MCF 10A (cell line): ENCODE measurements at regions of chr1 and their contacts with region 1.

Region 1: DNA sequence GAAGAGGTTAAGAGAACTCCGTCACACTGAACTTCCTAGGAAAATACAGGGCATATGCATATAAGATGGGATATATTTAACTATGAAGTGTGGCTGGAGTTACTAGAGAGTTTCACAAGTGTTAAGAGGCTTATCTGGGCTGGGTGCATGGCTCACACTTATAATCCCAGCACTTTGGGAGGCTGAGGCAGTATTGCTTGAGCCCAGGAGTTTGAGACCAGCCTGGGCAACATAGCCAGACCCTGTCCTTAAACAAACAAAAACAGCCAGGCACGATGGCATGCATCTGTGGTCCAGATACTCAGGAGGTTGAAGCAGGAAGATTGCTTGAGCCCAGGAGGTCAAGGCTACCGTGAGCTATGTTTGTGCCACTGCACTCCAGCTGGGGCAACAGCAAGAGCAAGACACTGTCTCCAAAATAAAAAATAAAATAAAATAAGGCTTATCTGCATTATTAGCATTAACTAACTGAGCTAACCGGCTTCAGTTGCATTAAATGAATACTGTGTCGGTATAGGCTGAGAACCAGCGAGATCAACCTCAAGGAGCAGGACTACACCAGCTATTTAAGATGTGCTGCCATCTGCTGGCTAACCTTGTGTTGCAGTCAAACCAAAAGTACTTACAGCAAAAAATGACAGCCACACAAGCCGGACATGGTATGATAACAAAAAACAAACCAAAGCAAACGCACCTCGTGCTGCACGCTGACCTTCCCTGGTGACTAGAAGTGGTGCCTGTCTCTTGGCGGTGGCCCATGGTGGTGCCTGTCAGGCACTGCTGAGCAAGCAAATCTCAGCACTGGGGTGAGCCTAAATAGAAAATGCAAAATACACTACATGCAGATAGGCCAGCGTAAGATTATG is 19.7 kb upstream of the RBBP5 start:
- DNase-seq: peak; percentile 91
- H3K4me3 Mint-ChIP-seq: no peak overlapping the region
- H3K27ac Mint-ChIP-seq: no peak overlapping the region
- H3K4me1 Mint-ChIP-seq: peaks cover 19% of the 10 kb centered on the region
- H3K27me3 Mint-ChIP-seq: no peaks in the 10 kb centered on the region
- CTCF ChIP-seq: peak; percentile 82

Region 2: DNA sequence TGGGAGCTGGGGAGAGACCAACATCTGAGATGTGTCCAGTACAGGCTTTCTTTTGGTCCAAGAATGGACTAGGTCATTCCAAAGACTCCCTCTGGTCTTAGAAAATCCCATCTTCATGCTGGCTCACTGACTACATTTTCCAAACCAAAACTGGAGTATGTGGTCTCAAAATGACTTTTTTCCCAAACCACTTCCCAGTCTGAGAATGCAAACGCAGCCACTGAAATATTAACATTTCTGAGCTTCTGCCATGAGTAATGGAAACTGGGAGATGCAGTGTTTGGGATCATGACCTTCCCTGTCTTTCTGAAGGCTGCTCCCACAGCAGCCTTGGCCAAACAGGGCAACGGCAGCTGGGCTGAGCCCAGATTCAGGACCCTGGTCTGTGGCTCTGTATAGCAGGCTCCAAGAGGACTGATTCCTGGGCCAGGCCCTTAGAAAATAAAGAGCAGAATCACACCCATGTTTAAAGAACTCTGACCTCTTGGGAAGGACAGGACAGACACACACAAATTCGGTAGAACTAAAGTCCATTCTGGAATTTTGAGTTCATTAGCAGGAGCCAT is 160.5 kb before region 1 on chr1:
- CTCF ChIA-PET with region 1: interaction called, 56 read pairs
- POLR2A ChIA-PET with region 1: interaction called, 6 read pairs
- intact Hi-C with region 1: no loop called
- DNase-seq: no peak
- H3K4me3 Mint-ChIP-seq: no peak overlapping the region
- H3K27ac Mint-ChIP-seq: no peak overlapping the region
- H3K4me1 Mint-ChIP-seq: no peaks in the 10 kb centered on the region
- H3K27me3 Mint-ChIP-seq: peaks cover 62% of the 10 kb centered on the region
- CTCF ChIP-seq: no peak

Region 3: GRCh38 chr1:205082431-205082830 is 59.0 kb before region 1 on chr1:
- CTCF ChIA-PET with region 1: interaction called, 11 read pairs
- POLR2A ChIA-PET with region 1: no interaction called
- intact Hi-C with region 1: no loop called
- DNase-seq: no peak
- H3K4me3 Mint-ChIP-seq: no peak overlapping the region
- H3K27ac Mint-ChIP-seq: no peak overlapping the region
- H3K4me1 Mint-ChIP-seq: peaks cover 4% of the 10 kb centered on the region
- H3K27me3 Mint-ChIP-seq: no peaks in the 10 kb centered on the region
- CTCF ChIP-seq: no peak

Region 4: DNA sequence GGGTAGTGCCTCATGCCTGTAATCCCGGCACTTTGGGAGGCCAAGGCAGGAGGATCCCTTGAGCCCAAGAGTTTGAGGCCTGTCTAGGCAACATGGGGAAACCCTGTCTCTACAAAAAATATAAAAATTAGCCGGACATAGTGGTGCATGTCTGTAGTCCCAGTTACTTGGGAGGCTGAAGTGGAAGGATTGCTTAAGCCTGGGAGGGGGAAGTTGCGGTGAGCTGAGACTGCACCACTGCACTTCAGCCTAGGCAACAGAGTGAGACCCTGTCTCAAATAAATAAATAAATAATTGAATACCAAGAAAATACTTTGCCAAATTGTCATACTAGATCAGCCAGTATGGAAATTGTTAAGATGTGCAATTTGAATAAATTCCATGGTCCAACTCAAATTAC is 13.8 kb before region 1 on chr1:
- CTCF ChIA-PET with region 1: interaction called, 231 read pairs
- POLR2A ChIA-PET with region 1: interaction called, 33 read pairs
- intact Hi-C with region 1: loop called (anchors 1 kb)
- DNase-seq: no peak
- H3K4me3 Mint-ChIP-seq: no peak overlapping the region
- H3K27ac Mint-ChIP-seq: no peak overlapping the region
- H3K4me1 Mint-ChIP-seq: peaks cover 5% of the 10 kb centered on the region
- H3K27me3 Mint-ChIP-seq: no peaks in the 10 kb centered on the region
- CTCF ChIP-seq: no peak

Region 5: DNA sequence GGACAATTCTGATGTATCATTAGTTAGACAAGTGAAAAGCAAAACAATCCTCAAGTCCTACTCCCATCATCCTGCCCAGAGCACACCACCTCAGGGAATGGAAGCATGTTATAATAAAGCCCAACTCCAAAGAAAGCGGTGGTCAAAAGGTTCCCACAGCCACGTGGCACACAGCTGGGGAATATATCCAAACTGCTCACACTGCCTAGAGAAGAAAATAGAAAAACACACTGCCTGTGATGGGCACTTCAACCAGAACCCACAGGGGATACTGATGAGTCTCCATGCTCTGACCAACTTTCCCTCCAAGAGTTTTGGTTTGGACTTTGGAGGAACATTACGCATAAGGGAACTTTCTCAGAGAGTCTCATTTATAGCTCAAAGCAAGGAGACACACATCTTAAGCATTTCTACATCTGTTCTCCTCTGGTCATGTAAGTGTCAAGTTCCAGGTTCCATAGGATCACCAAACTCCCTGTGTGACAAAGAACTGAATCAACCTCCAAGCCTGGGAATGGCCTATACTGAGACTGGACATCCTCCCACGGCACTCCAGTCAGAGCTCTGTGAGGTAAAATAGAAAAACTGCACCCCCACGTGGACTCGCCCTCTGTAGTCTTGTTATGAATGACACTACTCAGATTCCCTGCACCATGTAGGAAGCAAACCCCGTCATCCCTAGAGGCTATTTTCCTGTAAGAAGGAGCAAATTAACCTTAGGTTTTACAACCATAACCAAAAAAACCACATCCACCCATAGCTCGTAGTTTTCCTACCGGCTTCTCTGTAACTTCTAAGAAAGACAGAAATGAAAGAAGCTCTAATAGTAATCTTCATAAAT is 57.8 kb after region 1 on chr1:
- CTCF ChIA-PET with region 1: interaction called, 14 read pairs
- POLR2A ChIA-PET with region 1: no interaction called
- intact Hi-C with region 1: no loop called
- DNase-seq: no peak
- H3K4me3 Mint-ChIP-seq: no peak overlapping the region
- H3K27ac Mint-ChIP-seq: no peak overlapping the region
- H3K4me1 Mint-ChIP-seq: peaks cover 17% of the 10 kb centered on the region
- H3K27me3 Mint-ChIP-seq: no peaks in the 10 kb centered on the region
- CTCF ChIP-seq: no peak

Region 6: DNA sequence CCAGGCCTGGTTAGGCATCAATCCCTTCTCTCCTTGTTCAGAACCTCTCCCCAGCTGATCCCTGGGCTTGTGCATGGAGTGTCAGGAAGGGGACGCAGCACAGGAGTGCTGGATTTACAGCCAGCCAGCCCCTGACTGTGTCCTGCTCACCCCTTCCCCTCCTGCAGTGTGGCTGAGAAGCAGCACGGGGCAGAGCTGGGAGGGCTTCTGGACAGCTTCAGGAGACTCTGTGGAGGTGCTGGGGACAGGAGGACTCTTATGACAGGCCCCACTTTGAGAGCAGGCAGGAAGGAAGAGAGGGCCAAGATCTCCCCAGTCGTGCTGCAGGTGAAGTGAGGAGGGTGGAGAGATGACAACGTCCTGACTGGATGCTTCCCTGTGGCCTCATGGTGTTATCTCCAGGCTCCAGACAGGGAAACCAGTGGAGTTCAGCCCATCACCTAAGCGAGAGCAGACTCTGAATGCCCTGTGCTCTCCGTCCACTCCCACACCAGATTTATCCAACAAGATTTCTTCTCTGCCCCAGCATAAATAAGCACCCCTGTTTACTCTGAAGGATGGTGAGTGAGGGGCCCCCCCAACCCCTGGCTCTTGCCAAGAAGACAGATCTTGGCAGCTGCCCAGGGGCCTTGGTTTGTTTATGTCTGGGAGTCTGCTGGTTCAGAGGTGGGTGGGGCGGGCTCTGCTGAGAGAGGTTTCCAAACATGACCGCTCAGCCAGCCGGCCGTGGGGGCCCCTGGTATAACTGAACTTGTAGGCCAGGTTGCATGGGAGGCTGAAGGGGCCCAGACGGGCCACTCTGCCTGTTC is 107.5 kb after region 1 on chr1:
- CTCF ChIA-PET with region 1: interaction called, 113 read pairs
- POLR2A ChIA-PET with region 1: interaction called, 5 read pairs
- intact Hi-C with region 1: no loop called
- DNase-seq: peak; percentile 69
- H3K4me3 Mint-ChIP-seq: no peak overlapping the region
- H3K27ac Mint-ChIP-seq: no peak overlapping the region
- H3K4me1 Mint-ChIP-seq: peaks cover 11% of the 10 kb centered on the region
- H3K27me3 Mint-ChIP-seq: no peaks in the 10 kb centered on the region
- CTCF ChIP-seq: no peak